IMR-90 (cell line): ENCODE measurements at regions of chr1 and their contacts with region 1.

Region 1: GRCh38 chr1:8409106-8409505 is 91.2 kb downstream of the SLC45A1 start:
- DNase-seq: peak; percentile 81
- ATAC-seq: peak; percentile 38
- H3K4me3 ChIP-seq: no peak overlapping the region
- H3K27ac ChIP-seq: peak overlapping the region; percentile 87
- H3K4me1 ChIP-seq: peaks cover 50% of the 10 kb centered on the region
- H3K27me3 ChIP-seq: no peaks in the 10 kb centered on the region
- CTCF ChIP-seq: peak; percentile 43
- POLR2A ChIP-seq: no peak
- RAD21 ChIP-seq: peak; percentile 44; the same call in 1 of the 2 replicates

Region 2: DNA sequence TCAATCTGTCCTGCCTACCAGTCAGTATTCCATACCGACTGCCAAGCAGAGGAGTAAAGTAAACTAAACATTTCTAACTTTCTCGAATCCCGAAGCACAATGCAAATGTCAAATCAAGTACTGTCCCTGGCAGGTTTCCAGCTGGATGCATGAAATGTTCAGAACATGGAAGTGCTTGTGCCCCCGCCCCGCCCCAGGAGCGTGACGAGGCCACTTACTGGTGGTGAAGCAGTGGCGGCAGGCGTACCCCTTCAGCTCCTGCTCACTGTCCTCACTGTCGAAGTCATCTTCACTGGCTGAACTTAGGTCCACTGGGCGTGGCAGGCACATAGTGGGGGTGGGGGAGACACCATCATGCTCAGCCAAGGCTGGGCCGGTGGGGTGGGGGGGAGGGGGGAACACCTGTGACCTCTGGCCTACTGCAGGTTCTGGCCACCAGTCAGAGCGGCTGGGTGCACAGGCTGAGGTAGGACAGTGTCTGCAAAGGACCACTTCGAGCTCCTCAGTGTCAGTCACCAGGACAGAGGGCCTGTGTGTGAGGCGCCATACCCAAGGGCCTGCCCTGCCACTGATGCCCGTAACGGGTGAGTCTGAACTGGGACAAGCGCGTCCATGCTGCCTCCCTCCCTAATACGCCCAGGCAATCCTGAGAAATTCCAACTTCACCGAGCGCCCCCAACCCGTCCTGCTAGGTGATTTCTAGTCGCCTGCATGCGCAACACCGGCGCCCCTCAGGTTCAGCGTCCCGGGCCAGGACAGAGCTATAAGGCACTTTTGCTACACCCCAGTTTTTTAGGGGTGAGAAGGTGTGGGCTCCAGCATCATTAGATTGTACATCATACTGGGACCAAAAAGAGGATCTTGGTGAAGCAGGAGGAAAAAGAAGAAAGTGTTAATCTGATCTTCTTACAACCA is 44.3 kb before region 1 on chr1:
- CTCF ChIA-PET with region 1: no interaction called
- POLR2A ChIA-PET with region 1: no interaction called
- dilution Hi-C with region 1: no loop called
- in situ Hi-C with region 1: no loop called
- intact Hi-C with region 1: no loop called
- DNase-seq: no peak
- ATAC-seq: no peak
- H3K4me3 ChIP-seq: no peak overlapping the region
- H3K27ac ChIP-seq: no peak overlapping the region
- H3K4me1 ChIP-seq: peaks cover 18% of the 10 kb centered on the region
- H3K27me3 ChIP-seq: no peaks in the 10 kb centered on the region
- CTCF ChIP-seq: no peak
- POLR2A ChIP-seq: no peak
- RAD21 ChIP-seq: no peak

Region 3: DNA sequence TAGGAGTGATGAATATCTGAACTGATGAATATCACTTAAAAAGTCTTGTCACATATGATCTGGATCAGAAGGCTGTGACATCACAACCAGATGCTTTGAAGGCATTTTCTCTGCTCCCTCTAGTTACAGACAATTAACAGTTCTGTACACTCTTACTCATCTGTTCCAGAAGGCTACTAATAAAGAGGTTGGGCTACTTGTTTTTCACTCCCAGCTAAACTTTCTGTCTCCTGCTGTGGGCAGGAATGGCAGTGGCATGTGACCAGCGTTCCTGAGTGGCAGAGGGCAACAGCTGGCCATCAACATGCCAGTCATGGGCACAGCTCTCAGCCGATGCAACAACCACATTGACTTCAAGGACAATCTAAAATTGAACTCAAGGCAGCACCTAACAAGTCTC is 24.5 kb before region 1 on chr1:
- CTCF ChIA-PET with region 1: interaction called, 3 read pairs
- POLR2A ChIA-PET with region 1: interaction called, 12 read pairs
- dilution Hi-C with region 1: no loop called
- in situ Hi-C with region 1: no loop called
- intact Hi-C with region 1: no loop called
- DNase-seq: no peak
- ATAC-seq: no peak
- H3K4me3 ChIP-seq: no peak overlapping the region
- H3K27ac ChIP-seq: peak overlapping the region; percentile 11; the same call in 1 of the 2 replicates
- H3K4me1 ChIP-seq: peaks cover 23% of the 10 kb centered on the region
- H3K27me3 ChIP-seq: no peaks in the 10 kb centered on the region
- CTCF ChIP-seq: no peak
- POLR2A ChIP-seq: no peak
- RAD21 ChIP-seq: no peak

Region 4: DNA sequence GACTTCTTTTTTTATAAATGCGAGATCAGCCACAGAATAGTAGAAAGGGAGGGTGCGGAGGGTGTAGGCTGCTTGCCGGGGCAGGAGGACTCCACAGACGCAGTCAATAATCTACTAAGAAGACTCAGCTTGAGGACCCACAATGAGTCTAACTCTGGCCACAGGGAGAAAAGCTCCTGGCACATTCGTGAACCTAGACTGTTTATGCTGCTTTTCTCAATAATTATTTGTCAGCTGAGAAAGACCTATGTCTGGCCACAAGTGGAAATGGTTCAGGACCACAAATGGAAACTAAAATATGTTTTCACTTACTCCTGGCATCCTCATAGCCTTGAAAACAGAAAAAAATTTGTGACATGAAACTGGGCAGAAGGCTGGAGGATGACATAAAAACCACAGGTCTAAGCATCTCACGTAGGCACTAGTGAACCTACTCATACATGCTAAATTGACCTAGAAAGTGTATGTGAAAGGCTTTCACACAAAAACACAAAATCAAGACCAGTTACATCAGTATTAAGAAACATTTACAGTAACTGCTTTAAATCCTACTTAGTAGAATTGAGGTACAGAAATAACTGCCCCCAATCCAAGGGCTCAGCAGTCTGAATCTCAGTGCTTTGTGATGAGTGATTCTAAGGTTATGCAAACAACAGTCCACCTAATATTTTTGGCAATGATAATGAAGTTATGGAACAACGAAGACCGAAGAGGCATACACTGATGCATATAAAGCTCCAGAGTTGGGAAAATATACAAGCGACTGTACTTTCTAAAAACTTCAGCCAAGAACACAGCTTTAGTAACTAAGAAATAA is 68.3 kb after region 1 on chr1:
- CTCF ChIA-PET with region 1: no interaction called
- POLR2A ChIA-PET with region 1: no interaction called
- dilution Hi-C with region 1: no loop called
- in situ Hi-C with region 1: no loop called
- intact Hi-C with region 1: no loop called
- DNase-seq: peak; percentile 76
- ATAC-seq: peak; percentile 64
- H3K4me3 ChIP-seq: no peak overlapping the region
- H3K27ac ChIP-seq: peak overlapping the region; percentile 86; the same call in 1 of the 2 replicates
- H3K4me1 ChIP-seq: peaks cover 17% of the 10 kb centered on the region
- H3K27me3 ChIP-seq: no peaks in the 10 kb centered on the region
- CTCF ChIP-seq: no peak
- POLR2A ChIP-seq: no peak
- RAD21 ChIP-seq: no peak